ENCODE measurements at regions of chr7 and their contacts with region 1.

Region 1: DNA sequence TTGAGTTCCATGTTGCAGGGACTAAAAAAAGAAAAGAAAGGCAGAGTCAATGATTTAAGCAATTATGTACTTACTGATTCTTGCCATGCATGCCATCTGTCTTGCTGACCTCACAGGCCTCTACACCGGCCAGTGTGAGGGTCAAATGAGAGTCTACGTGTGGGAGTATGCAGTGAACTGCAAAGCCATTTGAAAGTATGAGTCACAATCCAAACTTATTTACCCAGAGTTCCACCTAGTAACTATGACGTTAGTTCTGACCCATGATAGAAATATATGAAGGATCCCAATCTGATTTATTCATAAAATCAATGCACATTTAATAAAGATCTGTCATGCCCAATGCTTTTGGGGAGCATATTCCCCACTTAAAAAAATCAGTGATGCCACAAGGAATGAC is 26.5 kb downstream of the PDE1C start:
- DNase-seq: no peak
- H3K4me3 ChIP-seq: no peak overlapping the region
- H3K27ac ChIP-seq: peak overlapping the region in 6 of 59 donors; percentile 2 to 52 (median 22)
- H3K27me3 ChIP-seq: no peaks in the 10 kb centered on the region
- CTCF ChIP-seq: no peak

Region 2: GRCh38 chr7:32164346-32164957 is 120.7 kb after region 1 on chr7:
- intact Hi-C with region 1: loop called in 1 of 2 experiments (anchors 10 kb)
- DNase-seq: peak in 1 of 10 donors; percentile 28
- H3K4me3 ChIP-seq: no peak overlapping the region
- H3K27ac ChIP-seq: peak overlapping the region in 4 of 59 donors; percentile 28 to 63 (median 44)
- H3K27me3 ChIP-seq: no peaks in the 10 kb centered on the region
- CTCF ChIP-seq: peak; percentile 12 to 77 (median 54)